SK-N-SH (cell line): ENCODE measurements at regions of chr20 and their contacts with region 1.

Region 1: GRCh38 chr20:79565-79964 is 7.9 kb upstream of the DEFB125 start:
- DNase-seq: no peak
- H3K4me3 ChIP-seq: no peak overlapping the region
- H3K27ac ChIP-seq: no peak overlapping the region
- H3K4me1 ChIP-seq: no peaks in the 10 kb centered on the region
- H3K27me3 ChIP-seq: no peaks in the 10 kb centered on the region
- CTCF ChIP-seq: no peak
- EP300 ChIP-seq: no peak
- RAD21 ChIP-seq: no peak

Region 2: GRCh38 chr20:93641-94040 is 14.1 kb after region 1 on chr20:
- CTCF ChIA-PET with region 1: interaction called, 14 read pairs
- POLR2A ChIA-PET with region 1: no interaction called
- DNase-seq: no peak
- H3K4me3 ChIP-seq: no peak overlapping the region
- H3K27ac ChIP-seq: no peak overlapping the region
- H3K4me1 ChIP-seq: no peaks in the 10 kb centered on the region
- H3K27me3 ChIP-seq: no peaks in the 10 kb centered on the region
- CTCF ChIP-seq: no peak
- EP300 ChIP-seq: no peak
- RAD21 ChIP-seq: no peak